ENCODE measurements at regions of chr5 and their contacts with region 1.

Region 1: DNA sequence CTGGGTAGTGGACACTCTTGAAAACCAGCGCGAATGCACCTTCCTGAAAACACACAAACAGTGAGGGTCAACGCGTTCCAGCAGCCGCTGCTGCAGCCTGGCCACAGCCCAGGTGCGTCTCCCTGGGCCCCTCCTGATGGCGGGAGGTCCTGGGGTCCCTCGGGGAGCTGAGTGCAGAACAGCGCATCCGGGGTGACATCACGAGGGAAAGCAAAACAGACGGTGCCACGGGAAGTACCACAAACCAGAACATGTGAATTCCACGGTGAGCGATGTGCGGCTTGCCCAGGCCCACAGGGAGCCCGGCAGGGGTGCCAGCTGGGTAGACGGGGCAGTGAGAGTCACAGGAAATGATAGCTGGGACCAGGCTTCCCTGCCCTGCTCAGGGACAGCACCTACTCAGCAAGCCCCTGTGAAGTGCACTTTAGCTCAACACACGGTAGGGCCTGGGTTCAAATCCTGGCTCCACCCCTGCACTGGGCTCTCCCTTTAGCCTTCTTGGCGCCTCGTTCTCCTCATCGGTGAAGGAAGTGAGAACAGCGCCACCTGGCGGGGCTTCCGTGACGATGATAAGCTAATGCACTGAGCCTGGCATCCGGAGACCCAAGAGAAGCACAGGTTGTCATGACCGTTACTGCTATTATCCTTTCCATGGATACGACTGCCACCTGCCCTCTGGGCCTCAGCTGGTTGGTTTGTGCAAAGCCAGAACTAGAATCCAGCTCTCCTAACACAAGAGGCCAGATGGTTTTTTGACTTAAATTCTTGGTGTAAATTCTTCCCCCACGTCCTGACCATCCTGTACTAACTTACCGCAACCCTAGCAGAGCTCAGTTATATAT is 24.6 kb downstream of the GFPT2 start:
- DNase-seq: peak; percentile 74
- ATAC-seq: peak; percentile 90
- H3K4me3 ChIP-seq: no peak overlapping the region
- H3K27ac ChIP-seq: no peak overlapping the region
- H3K4me1 ChIP-seq: peaks cover 33 to 45% of the 10 kb centered on the region in 2 experiments
- H3K27me3 ChIP-seq: no peaks in the 10 kb centered on the region
- CTCF ChIP-seq: peak; percentile 84 to 94 (median 90)
- POLR2A ChIP-seq: no peak
- RAD21 ChIP-seq: peak; percentile 73

Region 2: DNA sequence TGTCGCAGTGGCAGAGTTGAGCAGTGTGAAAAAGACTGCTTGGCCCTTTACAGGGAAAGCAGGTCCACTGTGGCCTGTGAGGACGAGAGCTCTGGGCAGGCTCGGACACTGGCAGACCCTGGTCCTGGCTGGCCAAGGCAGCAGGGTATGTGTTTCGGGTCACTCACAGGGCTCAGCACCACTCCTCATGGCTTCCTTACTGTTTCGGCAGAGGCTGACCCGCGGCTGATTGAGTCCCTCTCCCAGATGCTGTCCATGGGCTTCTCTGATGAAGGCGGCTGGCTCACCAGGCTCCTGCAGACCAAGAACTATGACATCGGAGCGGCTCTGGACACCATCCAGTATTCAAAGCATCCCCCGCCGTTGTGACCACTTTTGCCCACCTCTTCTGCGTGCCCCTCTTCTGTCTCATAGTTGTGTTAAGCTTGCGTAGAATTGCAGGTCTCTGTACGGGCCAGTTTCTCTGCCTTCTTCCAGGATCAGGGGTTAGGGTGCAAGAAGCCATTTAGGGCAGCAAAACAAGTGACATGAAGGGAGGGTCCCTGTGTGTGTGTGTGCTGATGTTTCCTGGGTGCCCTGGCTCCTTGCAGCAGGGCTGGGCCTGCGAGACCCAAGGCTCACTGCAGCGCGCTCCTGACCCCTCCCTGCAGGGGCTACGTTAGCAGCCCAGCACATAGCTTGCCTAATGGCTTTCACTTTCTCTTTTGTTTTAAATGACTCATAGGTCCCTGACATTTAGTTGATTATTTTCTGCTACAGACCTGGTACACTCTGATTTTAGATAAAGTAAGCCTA is 492.1 kb before region 1 on chr5:
- CTCF ChIA-PET with region 1: no interaction called
- POLR2A ChIA-PET with region 1: no interaction called
- RAD21 ChIA-PET with region 1: no interaction called
- intact Hi-C with region 1: no loop called
- DNase-seq: no peak
- ATAC-seq: peak; percentile 30; the same call in 1 of the 2 replicates
- H3K4me3 ChIP-seq: no peak overlapping the region
- H3K27ac ChIP-seq: no peak overlapping the region
- H3K4me1 ChIP-seq: no peaks in the 10 kb centered on the region
- H3K27me3 ChIP-seq: no peaks in the 10 kb centered on the region
- CTCF ChIP-seq: 0 out of 6 replicates have a peak, but pooled peaks of 1 of the 3 experiments have one; percentile 6
- POLR2A ChIP-seq: no peak
- RAD21 ChIP-seq: no peak

Region 3: DNA sequence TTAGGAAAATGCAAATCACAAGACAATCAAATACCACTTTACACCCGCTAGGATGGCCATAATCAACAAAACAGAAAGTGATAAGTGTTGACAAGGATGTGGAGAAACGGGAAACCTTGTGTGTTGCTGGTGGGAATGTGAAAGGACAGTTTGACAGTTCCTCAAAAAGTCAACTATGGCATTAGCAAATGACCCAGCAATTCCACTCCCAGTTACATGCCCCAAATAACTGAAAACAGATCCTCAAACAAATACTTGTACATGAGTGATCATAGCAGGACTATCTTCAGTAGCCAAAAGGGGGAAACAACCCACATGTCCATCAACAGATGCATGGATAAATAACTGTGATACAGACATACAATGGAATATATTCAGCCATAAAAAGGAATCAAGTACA is 140.8 kb before region 1 on chr5:
- CTCF ChIA-PET with region 1: no interaction called
- POLR2A ChIA-PET with region 1: no interaction called
- RAD21 ChIA-PET with region 1: no interaction called
- intact Hi-C with region 1: no loop called
- DNase-seq: no peak
- ATAC-seq: no peak
- H3K4me3 ChIP-seq: no peak overlapping the region
- H3K27ac ChIP-seq: no peak overlapping the region
- H3K4me1 ChIP-seq: no peaks in the 10 kb centered on the region
- H3K27me3 ChIP-seq: no peaks in the 10 kb centered on the region
- CTCF ChIP-seq: no peak
- POLR2A ChIP-seq: no peak
- RAD21 ChIP-seq: no peak

Region 4: DNA sequence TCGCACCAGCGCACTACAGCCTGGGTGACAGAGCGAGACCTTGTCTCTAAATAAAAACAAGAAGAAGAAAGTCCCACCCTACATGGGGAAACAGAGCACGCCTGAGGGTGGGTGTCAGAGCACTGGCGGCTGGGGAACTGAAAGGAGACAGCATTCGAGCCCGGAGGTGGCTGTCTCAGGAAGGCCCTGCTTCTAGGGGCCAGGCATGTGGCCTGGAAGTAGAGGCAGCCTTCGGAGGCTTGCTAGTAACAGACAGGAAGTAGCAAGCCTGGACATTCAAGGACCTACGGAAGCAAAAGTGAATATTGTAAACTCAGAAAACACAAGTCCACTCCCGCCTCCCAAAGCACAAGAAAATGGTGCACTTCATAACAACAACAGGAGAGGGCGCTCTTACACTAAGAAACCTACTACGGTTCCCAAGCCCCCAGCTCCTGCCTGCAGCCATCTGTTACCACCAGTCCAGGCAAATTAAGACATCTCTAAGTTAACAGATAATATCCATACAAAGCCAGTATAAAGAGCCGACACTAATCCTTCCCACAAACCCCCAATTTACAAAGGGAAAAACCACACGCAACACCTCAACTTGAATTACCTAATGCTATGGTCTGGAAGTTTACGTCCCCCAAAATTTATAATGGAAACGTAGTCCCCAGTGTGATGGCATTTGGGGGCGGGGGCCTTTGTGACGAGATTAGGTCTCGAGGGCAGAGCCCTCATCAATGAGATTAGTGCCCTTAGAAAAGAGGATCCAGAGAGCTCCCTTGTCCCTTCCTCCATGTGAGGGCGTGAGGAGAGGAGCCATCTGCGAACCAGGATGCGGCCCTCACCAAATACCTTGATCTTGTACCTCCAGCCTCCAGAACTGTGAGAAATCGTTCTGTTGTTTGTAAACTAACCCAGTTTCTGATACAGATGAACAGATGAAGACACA is 127.2 kb before region 1 on chr5:
- CTCF ChIA-PET with region 1: interaction called, 17 read pairs
- POLR2A ChIA-PET with region 1: no interaction called
- RAD21 ChIA-PET with region 1: no interaction called
- intact Hi-C with region 1: loop called (anchors 5 kb)
- DNase-seq: peak; percentile 27
- ATAC-seq: peak; percentile 63
- H3K4me3 ChIP-seq: no peak overlapping the region
- H3K27ac ChIP-seq: no peak overlapping the region
- H3K4me1 ChIP-seq: no peaks in the 10 kb centered on the region
- H3K27me3 ChIP-seq: no peaks in the 10 kb centered on the region
- CTCF ChIP-seq: peak; percentile 61 to 69 (median 67); a peak in 5 of 6 replicates
- POLR2A ChIP-seq: no peak
- RAD21 ChIP-seq: peak; percentile 74

Region 5: DNA sequence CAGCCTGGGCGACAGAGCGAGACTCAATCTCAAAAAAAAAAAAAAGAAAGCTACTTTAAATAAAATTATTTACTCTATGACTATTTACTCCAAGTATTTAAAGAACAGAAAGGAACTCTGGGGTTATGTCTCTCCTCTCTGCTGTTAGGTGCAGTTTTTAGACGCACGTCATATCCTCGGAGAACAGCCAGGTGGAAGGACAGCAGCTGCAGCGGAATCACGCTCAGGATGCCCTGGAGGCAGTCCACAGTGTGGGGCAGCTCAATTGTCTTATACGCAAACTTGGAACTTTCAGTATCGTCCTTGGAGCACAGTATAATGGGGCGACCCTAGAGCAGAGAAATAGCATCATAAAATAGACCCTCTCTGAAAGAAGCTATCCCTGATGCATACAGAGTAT is 26.3 kb before region 1 on chr5:
- CTCF ChIA-PET with region 1: no interaction called
- POLR2A ChIA-PET with region 1: no interaction called
- RAD21 ChIA-PET with region 1: no interaction called
- intact Hi-C with region 1: no loop called
- DNase-seq: no peak
- ATAC-seq: no peak
- H3K4me3 ChIP-seq: no peak overlapping the region
- H3K27ac ChIP-seq: no peak overlapping the region
- H3K4me1 ChIP-seq: no peaks in the 10 kb centered on the region
- H3K27me3 ChIP-seq: no peaks in the 10 kb centered on the region
- CTCF ChIP-seq: no peak
- POLR2A ChIP-seq: no peak
- RAD21 ChIP-seq: no peak

Region 6: DNA sequence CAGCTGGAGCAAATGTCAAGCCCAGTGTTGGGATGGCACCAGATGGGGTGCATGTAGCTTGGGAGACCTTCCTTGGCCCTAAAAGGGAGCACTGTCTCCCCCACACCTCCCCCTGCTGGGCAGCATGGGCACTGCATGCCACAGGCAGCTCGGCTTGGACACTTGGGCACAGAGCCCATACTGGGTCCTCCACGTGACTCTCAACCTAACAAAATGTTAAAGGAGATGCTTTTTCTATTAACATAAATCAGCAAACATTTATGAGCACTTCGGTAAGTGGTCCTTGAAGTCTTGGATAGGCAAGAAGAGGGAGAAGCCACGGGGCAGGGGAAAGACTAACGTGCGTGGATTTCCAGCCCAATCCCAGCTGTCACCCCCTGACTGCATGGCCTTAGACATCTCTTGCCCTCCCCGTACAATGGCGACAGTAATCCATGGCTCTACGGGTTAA is 12.7 kb before region 1 on chr5:
- CTCF ChIA-PET with region 1: interaction called, 31 read pairs
- POLR2A ChIA-PET with region 1: no interaction called
- RAD21 ChIA-PET with region 1: interaction called in 1 of 2 experiments, 4 read pairs
- intact Hi-C with region 1: no loop called
- DNase-seq: peak; percentile 19
- ATAC-seq: peak; percentile 87
- H3K4me3 ChIP-seq: no peak overlapping the region
- H3K27ac ChIP-seq: no peak overlapping the region
- H3K4me1 ChIP-seq: no peaks in the 10 kb centered on the region
- H3K27me3 ChIP-seq: no peaks in the 10 kb centered on the region
- CTCF ChIP-seq: peak; percentile 89 to 100 (median 98)
- POLR2A ChIP-seq: no peak
- RAD21 ChIP-seq: peak; percentile 65

Region 7: DNA sequence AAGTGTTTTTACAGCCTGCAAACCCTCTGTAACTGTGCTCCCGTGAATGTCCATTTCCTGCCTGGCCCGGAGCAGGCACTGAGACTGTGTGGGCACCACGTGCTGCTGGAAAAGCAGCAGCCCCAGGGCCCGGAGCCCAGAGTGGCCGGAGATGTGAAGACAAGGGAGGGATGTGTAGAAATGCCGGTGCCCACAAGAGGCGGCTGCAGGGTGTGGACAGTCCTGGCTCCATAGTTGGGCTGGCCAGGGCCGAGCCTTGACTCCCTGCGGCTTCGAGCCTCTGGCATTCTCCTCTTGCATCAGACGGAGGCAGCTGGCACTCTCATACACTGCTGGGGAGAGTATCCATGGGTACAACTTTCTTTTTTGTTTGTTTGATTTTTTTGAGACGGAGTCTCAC is 37.8 kb after region 1 on chr5:
- CTCF ChIA-PET with region 1: no interaction called
- POLR2A ChIA-PET with region 1: no interaction called
- RAD21 ChIA-PET with region 1: no interaction called
- intact Hi-C with region 1: no loop called
- DNase-seq: no peak
- ATAC-seq: no peak
- H3K4me3 ChIP-seq: no peak overlapping the region
- H3K27ac ChIP-seq: no peak overlapping the region
- H3K4me1 ChIP-seq: no peaks in the 10 kb centered on the region
- H3K27me3 ChIP-seq: no peaks in the 10 kb centered on the region
- CTCF ChIP-seq: no peak
- POLR2A ChIP-seq: no peak
- RAD21 ChIP-seq: no peak